WTC11 (cell line): ENCODE measurements at regions of chr2 and their contacts with region 1.

Region 1: GRCh38 chr2:10832203-10832936 is 19.8 kb upstream of the PDIA6 start:
- DNase-seq: peak; percentile 89
- ATAC-seq: peak; percentile 68
- H3K4me3 Mint-ChIP-seq: peak overlapping the region; percentile 65
- H3K27ac Mint-ChIP-seq: no peak overlapping the region
- H3K4me1 Mint-ChIP-seq: peaks cover 14% of the 10 kb centered on the region
- H3K27me3 Mint-ChIP-seq: peaks cover 22% of the 10 kb centered on the region
- CTCF ChIP-seq: peak; percentile 99

Region 2: DNA sequence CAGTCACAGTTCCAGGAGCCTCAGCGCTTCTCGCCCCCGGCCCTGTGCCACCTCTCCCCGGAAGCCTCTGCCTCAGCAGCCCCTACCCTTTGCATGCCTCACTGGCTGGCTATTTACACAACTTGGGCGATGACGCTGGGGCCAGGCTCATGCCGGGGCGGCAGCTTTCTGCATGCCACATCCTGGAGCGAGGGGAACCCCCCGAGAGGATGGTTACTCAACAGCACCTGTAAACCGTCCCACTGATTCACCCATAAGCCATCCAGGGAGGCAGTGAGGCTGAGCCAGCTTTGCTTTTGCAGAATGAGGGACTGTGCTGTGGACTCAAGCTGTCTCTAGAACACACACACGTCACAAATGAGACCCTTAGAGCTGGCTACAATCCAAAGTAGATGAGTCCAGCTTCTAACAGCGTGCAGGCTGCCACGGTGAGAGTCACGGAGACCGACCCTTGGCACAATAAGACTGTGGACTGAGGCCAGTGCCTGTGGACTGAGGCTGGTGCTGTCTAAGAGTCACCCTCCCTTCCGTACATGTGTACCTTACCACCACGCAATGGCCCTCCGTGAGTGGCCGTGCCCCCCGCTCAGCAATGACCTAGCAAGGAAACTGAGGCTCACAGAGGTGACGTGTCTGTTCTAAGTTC is 338.6 kb before region 1 on chr2:
- CTCF ChIA-PET with region 1: no interaction called
- POLR2A ChIA-PET with region 1: no interaction called
- DNase-seq: no peak
- ATAC-seq: no peak
- H3K4me3 Mint-ChIP-seq: no peak overlapping the region
- H3K27ac Mint-ChIP-seq: no peak overlapping the region
- H3K4me1 Mint-ChIP-seq: peaks cover 6% of the 10 kb centered on the region
- H3K27me3 Mint-ChIP-seq: no peaks in the 10 kb centered on the region
- CTCF ChIP-seq: no peak

Region 3: GRCh38 chr2:10760794-10761485 is 71.4 kb before region 1 on chr2:
- CTCF ChIA-PET with region 1: no interaction called
- POLR2A ChIA-PET with region 1: no interaction called
- DNase-seq: no peak
- ATAC-seq: no peak
- H3K4me3 Mint-ChIP-seq: no peak overlapping the region
- H3K27ac Mint-ChIP-seq: no peak overlapping the region
- H3K4me1 Mint-ChIP-seq: no peaks in the 10 kb centered on the region
- H3K27me3 Mint-ChIP-seq: no peaks in the 10 kb centered on the region; the same call in 1 of the 2 replicates
- CTCF ChIP-seq: no peak

Region 4: DNA sequence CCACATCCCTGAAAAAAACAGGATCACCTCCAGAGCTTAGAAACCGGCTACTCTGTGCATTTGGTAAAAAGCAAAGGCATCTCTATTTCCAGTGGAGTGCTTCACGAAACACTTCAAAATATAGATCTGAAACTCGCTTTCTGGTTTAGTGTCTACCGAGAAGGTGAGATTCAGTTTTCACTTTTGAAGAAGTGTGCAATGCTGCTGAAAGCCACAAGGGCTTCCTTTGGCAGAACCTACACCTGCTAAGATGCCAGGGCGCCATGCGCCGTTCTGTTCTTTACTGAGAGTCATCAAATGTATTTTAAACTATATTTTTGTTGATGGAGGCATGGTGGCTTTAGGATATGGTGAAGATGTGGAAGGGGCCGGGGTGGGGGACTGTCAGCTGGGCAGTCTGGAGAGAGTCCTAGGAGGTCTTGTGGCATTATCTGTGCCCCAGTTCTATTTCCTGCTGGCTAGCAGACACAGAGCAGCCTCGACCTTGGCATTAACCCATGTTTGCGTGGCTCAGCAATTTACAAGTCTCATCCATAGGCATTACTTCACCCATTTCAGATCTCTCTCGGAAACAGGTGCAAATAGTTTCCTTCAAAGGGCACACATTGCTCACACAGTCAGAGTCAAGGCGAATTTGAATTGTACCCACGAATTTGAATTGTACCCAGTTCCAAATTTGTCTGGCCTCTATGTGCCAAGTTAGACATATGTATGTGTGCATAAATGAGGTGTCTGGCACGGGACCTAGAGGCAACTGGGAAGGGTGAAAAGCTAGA is 32.7 kb after region 1 on chr2:
- CTCF ChIA-PET with region 1: interaction called, 15 read pairs
- POLR2A ChIA-PET with region 1: no interaction called
- DNase-seq: no peak
- ATAC-seq: no peak
- H3K4me3 Mint-ChIP-seq: no peak overlapping the region
- H3K27ac Mint-ChIP-seq: no peak overlapping the region
- H3K4me1 Mint-ChIP-seq: peaks cover 7% of the 10 kb centered on the region
- H3K27me3 Mint-ChIP-seq: no peaks in the 10 kb centered on the region
- CTCF ChIP-seq: no peak

Region 5: GRCh38 chr2:10900216-10901109 is 68.1 kb after region 1 on chr2:
- CTCF ChIA-PET with region 1: interaction called, 21 read pairs
- POLR2A ChIA-PET with region 1: no interaction called
- DNase-seq: no peak
- ATAC-seq: no peak
- H3K4me3 Mint-ChIP-seq: no peak overlapping the region
- H3K27ac Mint-ChIP-seq: no peak overlapping the region
- H3K4me1 Mint-ChIP-seq: peaks cover 6% of the 10 kb centered on the region
- H3K27me3 Mint-ChIP-seq: no peaks in the 10 kb centered on the region
- CTCF ChIP-seq: no peak

Region 6: GRCh38 chr2:10926191-10926820 is 93.9 kb after region 1 on chr2:
- CTCF ChIA-PET with region 1: interaction called, 17 read pairs
- POLR2A ChIA-PET with region 1: no interaction called
- DNase-seq: no peak
- ATAC-seq: 0 out of 2 replicates have a peak, but pooled peaks have one; percentile 11
- H3K4me3 Mint-ChIP-seq: no peak overlapping the region
- H3K27ac Mint-ChIP-seq: no peak overlapping the region
- H3K4me1 Mint-ChIP-seq: peaks cover 29% of the 10 kb centered on the region
- H3K27me3 Mint-ChIP-seq: no peaks in the 10 kb centered on the region; the same call in 1 of the 2 replicates
- CTCF ChIP-seq: no peak

Region 7: GRCh38 chr2:11073251-11073650 is 240.9 kb after region 1 on chr2:
- CTCF ChIA-PET with region 1: interaction called, 17 read pairs
- POLR2A ChIA-PET with region 1: no interaction called
- DNase-seq: peak; percentile 85
- ATAC-seq: peak; percentile 97
- H3K4me3 Mint-ChIP-seq: no peak overlapping the region
- H3K27ac Mint-ChIP-seq: peak overlapping the region; percentile 80; the same call in 1 of the 2 replicates
- H3K4me1 Mint-ChIP-seq: peaks cover 28% of the 10 kb centered on the region
- H3K27me3 Mint-ChIP-seq: no peaks in the 10 kb centered on the region; the same call in 1 of the 2 replicates
- CTCF ChIP-seq: peak; percentile 65

Region 8: GRCh38 chr2:11124503-11125068 is 292.2 kb after region 1 on chr2:
- CTCF ChIA-PET with region 1: interaction called, 231 read pairs
- POLR2A ChIA-PET with region 1: no interaction called
- DNase-seq: peak; percentile 90
- ATAC-seq: peak; percentile 95
- H3K4me3 Mint-ChIP-seq: no peak overlapping the region
- H3K27ac Mint-ChIP-seq: no peak overlapping the region
- H3K4me1 Mint-ChIP-seq: peaks cover 18% of the 10 kb centered on the region; the same call in 1 of the 2 replicates
- H3K27me3 Mint-ChIP-seq: peaks cover 6% of the 10 kb centered on the region; the same call in 1 of the 2 replicates
- CTCF ChIP-seq: peak; percentile 83